AG04450 (cell line): ENCODE measurements at regions of chr19 and their contacts with region 1.

Region 1: GRCh38 chr19:8355631-8356402 is 8.1 kb upstream of the ANGPTL4 start:
- DNase-seq: no peak
- H3K4me3 ChIP-seq: no peak overlapping the region
- H3K27ac ChIP-seq: peak overlapping the region; percentile 34
- H3K27me3 ChIP-seq: no peaks in the 10 kb centered on the region
- CTCF ChIP-seq: no peak

Region 2: DNA sequence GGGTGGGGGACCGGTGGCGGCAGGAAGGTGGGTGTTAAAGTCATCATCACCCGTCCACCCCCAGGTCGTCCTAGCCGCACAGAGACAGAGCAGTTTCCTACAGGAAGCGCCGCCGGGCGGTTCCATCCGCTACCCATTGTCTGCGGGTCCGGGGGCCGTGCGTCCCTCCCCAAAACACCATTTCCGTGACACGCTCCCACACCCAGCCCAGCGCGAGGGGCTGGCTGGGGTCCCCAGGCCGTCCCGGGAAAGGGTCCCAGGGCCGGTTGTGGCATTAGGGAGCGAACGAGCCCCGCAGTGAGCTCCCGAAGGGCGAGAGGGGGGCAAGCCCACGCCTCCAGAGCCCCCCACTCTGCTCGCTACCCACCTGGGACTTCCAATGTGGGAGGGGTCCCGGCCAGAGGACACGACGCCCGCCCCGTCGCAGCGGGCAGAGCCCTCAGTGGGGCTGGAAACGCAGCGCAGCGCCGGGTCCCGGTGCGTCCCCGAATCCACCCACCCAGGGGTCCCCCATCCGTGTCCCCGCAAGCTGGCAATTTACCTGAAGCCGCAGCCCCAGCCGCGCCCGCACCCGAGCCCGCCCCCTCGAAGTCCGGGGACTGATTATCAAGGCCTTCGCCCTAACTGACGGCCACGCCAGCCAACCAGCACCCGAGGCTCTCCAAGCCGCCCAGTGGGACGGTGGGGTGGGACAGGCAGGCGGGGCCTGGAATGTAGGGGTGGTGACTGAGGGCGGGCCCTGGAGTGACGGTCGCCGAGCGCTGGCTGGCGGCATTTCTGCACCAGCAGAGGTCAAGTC is 12.9 kb before region 1 on chr19 and contains the start of gene KANK3:
- CTCF ChIA-PET with region 1: interaction called, 25 read pairs
- POLR2A ChIA-PET with region 1: interaction called, 4 read pairs
- DNase-seq: peak; percentile 73
- H3K4me3 ChIP-seq: peak within 1 kb of the TSS; percentile 31; the same call in 1 of the 2 replicates
- H3K27ac ChIP-seq: no peak within 1 kb of the TSS
- H3K27me3 ChIP-seq: peaks cover 23% of the 10 kb centered on the region
- CTCF ChIP-seq: no peak
- polyA plus RNA-seq, gene KANK3: 0.07 TPM in 1 of 2 replicates, not detected in the other

Region 3: GRCh38 chr19:8389891-8390616 is 34.2 kb after region 1 on chr19 and contains the start of gene RAB11B:
- CTCF ChIA-PET with region 1: interaction called, 24 read pairs
- POLR2A ChIA-PET with region 1: interaction called, 9 read pairs
- DNase-seq: peak; percentile 99
- H3K4me3 ChIP-seq: peak within 1 kb of the TSS; percentile 79
- H3K27ac ChIP-seq: peak within 1 kb of the TSS; percentile 73
- H3K27me3 ChIP-seq: no peaks in the 10 kb centered on the region
- CTCF ChIP-seq: no peak
- polyA plus RNA-seq, gene RAB11B: 25.3 and 37.6 TPM in 2 replicates

Region 4: DNA sequence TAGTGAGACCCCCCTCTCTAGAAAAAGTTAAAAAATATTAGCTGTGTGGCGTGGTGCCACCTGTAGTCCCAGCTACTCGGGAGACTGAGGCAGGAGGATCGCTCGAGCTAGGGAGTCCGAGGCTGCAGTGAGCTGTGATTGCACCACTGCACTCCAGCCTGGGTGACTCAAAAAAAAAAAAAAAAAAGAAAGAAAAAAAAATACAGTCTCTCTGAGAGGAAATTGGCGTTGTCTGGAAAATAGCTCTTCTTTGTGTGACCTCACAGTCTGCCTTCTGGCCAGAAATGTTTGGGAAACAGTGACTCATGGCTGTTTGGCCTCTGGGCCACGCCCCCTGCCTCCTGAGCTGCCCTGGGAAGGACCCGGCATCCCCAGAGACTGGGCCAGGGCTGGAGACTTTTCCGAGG is 68.0 kb after region 1 on chr19:
- CTCF ChIA-PET with region 1: interaction called, 11 read pairs
- POLR2A ChIA-PET with region 1: interaction called, 4 read pairs
- DNase-seq: peak; percentile 85
- H3K4me3 ChIP-seq: no peak overlapping the region
- H3K27ac ChIP-seq: no peak overlapping the region
- H3K27me3 ChIP-seq: no peaks in the 10 kb centered on the region
- CTCF ChIP-seq: no peak

Region 5: GRCh38 chr19:8459520-8460259 is 103.9 kb after region 1 on chr19:
- CTCF ChIA-PET with region 1: interaction called, 11 read pairs
- POLR2A ChIA-PET with region 1: interaction called, 11 read pairs
- DNase-seq: peak; percentile 53
- H3K4me3 ChIP-seq: peak overlapping the region; percentile 31
- H3K27ac ChIP-seq: peak overlapping the region; percentile 73
- H3K27me3 ChIP-seq: no peaks in the 10 kb centered on the region
- CTCF ChIP-seq: no peak

Region 6: GRCh38 chr19:8513687-8514504 is 158.1 kb after region 1 on chr19 and contains the start of gene ZNF414:
- CTCF ChIA-PET with region 1: interaction called, 19 read pairs
- POLR2A ChIA-PET with region 1: interaction called, 7 read pairs
- DNase-seq: peak; percentile 92
- H3K4me3 ChIP-seq: peak within 1 kb of the TSS; percentile 76
- H3K27ac ChIP-seq: peak within 1 kb of the TSS; percentile 73
- H3K27me3 ChIP-seq: peaks cover 3% of the 10 kb centered on the region
- CTCF ChIP-seq: no peak
- polyA plus RNA-seq, gene ZNF414: 2.0 and 3.6 TPM in 2 replicates

Region 7: GRCh38 chr19:8697671-8698432 is 342.0 kb after region 1 on chr19:
- CTCF ChIA-PET with region 1: no interaction called
- POLR2A ChIA-PET with region 1: no interaction called
- DNase-seq: no peak
- H3K4me3 ChIP-seq: no peak overlapping the region
- H3K27ac ChIP-seq: no peak overlapping the region
- H3K27me3 ChIP-seq: no peaks in the 10 kb centered on the region
- CTCF ChIP-seq: no peak